ENCODE measurements at regions of chr3 and their contacts with region 1.

Region 1: GRCh38 chr3:48240711-48241491 is at the start of gene ZNF589:
- DNase-seq: peak; percentile 97
- H3K4me3 ChIP-seq: peak within 1 kb of the TSS; percentile 72 to 83 (median 76)
- H3K27ac ChIP-seq: peak within 1 kb of the TSS; percentile 87 to 89 (median 88)
- H3K4me1 ChIP-seq: peaks cover 0 to 23% (median 18%) of the 10 kb centered on the region in 4 donors
- H3K27me3 ChIP-seq: no peaks in the 10 kb centered on the region
- CTCF ChIP-seq: no peak
- EP300 ChIP-seq: peak in 1 of 4 donors; percentile 12
- POLR2A ChIP-seq: peak; percentile 39 to 64
- total RNA-seq, gene ZNF589: 5.7 to 24.1 (median 10.8) TPM

Region 2: GRCh38 chr3:48188266-48189201 is 52.4 kb before region 1 on chr3 and contains the start of gene CDC25A:
- intact Hi-C with region 1: loop called (anchors 2 kb)
- DNase-seq: peak; percentile 98
- H3K4me3 ChIP-seq: peak within 1 kb of the TSS; percentile 46 to 73 (median 68)
- H3K27ac ChIP-seq: peak within 1 kb of the TSS; percentile 42 to 74 (median 66)
- H3K4me1 ChIP-seq: peaks cover 0 to 17% (median 14%) of the 10 kb centered on the region in 4 donors
- H3K27me3 ChIP-seq: peaks cover 0 to 4% (median 0%) of the 10 kb centered on the region in 3 donors
- CTCF ChIP-seq: no peak
- EP300 ChIP-seq: no peak
- POLR2A ChIP-seq: no peak
- total RNA-seq, gene CDC25A: 0.27 to 3.9 (median 0.28) TPM in 3 of 4 donors, not detected in the other